BJ (cell line): ENCODE measurements at regions of chr6 and their contacts with region 1.

Region 1: GRCh38 chr6:137799950-137800568 is 67.0 kb upstream of the TNFAIP3 start:
- DNase-seq: no peak
- H3K4me3 ChIP-seq: no peak overlapping the region
- H3K27me3 ChIP-seq: no peaks in the 10 kb centered on the region
- CTCF ChIP-seq: peak; percentile 58

Region 2: GRCh38 chr6:137432054-137432611 is 367.9 kb before region 1 on chr6:
- CTCF ChIA-PET with region 1: no interaction called
- POLR2A ChIA-PET with region 1: no interaction called
- DNase-seq: no peak
- H3K4me3 ChIP-seq: no peak overlapping the region
- H3K27me3 ChIP-seq: peaks cover 1% of the 10 kb centered on the region; the same call in 1 of the 2 replicates
- CTCF ChIP-seq: no peak

Region 3: DNA sequence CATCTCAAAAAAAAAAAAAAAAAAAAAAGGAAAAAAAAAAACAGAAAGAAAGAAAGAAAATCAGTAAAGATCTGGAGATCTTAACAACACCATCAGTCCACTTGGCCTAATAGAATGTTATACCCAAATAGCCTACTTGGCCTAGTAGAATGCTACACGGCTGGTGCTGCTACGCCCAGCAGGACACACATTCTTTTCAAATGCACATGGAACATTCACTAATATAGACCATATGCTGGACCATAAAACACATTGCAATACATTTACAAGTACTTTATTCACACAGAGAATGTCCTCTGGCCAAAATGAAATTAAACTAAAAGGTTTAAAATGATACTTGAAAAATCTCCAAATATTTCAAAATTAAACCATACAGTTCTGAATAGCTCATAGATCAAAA is 13.0 kb before region 1 on chr6:
- CTCF ChIA-PET with region 1: interaction called, 11 read pairs
- POLR2A ChIA-PET with region 1: interaction called, 4 read pairs
- DNase-seq: peak; percentile 66
- H3K4me3 ChIP-seq: no peak overlapping the region
- H3K27me3 ChIP-seq: no peaks in the 10 kb centered on the region
- CTCF ChIP-seq: no peak

Region 4: GRCh38 chr6:137811121-137811915 is 11.3 kb after region 1 on chr6:
- CTCF ChIA-PET with region 1: interaction called, 25 read pairs
- POLR2A ChIA-PET with region 1: no interaction called
- DNase-seq: peak; percentile 54
- H3K4me3 ChIP-seq: no peak overlapping the region
- H3K27me3 ChIP-seq: no peaks in the 10 kb centered on the region
- CTCF ChIP-seq: no peak